Caco-2 (cell line): ENCODE measurements at regions of chr20 and their contacts with region 1.

Region 1: GRCh38 chr20:62793912-62794724 is 2.2 kb upstream of the MRGBP start:
- DNase-seq: peak; percentile 99 to 100
- H3K4me3 ChIP-seq: peak overlapping the region; percentile 57
- H3K4me3 Mint-ChIP-seq: peak overlapping the region; percentile 89
- H3K27ac Mint-ChIP-seq: peak overlapping the region; percentile 85
- H3K4me1 ChIP-seq: peaks cover 21% of the 10 kb centered on the region
- H3K4me1 Mint-ChIP-seq: peaks cover 15% of the 10 kb centered on the region
- H3K27me3 ChIP-seq: no peaks in the 10 kb centered on the region
- H3K27me3 Mint-ChIP-seq: no peaks in the 10 kb centered on the region
- CTCF ChIP-seq: no peak

Region 2: GRCh38 chr20:62368976-62369814 is 424.9 kb before region 1 on chr20:
- CTCF ChIA-PET with region 1: no interaction called
- POLR2A ChIA-PET with region 1: interaction called, 12 read pairs
- intact Hi-C with region 1: no loop called
- DNase-seq: peak in 1 of 2 experiments; percentile 72
- H3K4me3 ChIP-seq: peak overlapping the region; percentile 94
- H3K4me3 Mint-ChIP-seq: peak overlapping the region; percentile 70
- H3K27ac Mint-ChIP-seq: peak overlapping the region; percentile 90
- H3K4me1 ChIP-seq: peaks cover 55% of the 10 kb centered on the region
- H3K4me1 Mint-ChIP-seq: peaks cover 39% of the 10 kb centered on the region
- H3K27me3 ChIP-seq: no peaks in the 10 kb centered on the region
- H3K27me3 Mint-ChIP-seq: no peaks in the 10 kb centered on the region
- CTCF ChIP-seq: peak; percentile 54 to 77

Region 3: DNA sequence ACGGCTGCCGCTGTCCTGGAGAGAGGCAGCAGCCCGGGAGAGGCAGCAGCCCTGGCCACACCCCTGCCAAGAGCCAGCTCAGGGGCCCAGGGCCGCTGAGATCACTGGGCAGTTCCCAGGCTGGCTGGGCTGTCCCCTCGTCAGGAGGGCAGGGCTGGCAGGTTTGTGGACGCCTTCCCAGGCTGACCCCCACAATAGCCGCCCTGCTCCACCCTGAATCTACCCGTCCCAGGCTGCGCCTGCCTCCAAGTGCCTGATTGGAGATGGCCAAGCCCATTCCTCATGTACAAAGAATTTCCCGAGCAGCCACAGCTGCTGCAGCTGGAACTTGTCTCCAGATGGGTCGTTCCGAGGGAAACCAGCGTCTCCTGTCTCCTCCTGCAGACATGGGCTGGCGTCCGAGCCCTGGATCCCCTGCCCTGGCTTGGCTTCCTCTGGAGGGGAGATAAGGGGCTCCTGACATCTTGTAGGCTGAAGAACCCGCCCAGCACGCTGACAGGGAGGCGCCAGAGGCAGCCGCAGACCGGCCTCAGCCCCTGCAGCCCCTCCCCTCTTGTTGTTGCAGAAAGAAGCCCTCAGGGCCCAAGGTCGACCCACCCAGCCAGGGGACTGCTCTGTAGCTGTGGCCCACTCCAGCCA is 308.9 kb before region 1 on chr20:
- CTCF ChIA-PET with region 1: interaction called, 3 read pairs
- POLR2A ChIA-PET with region 1: no interaction called
- intact Hi-C with region 1: loop called (anchors 5 kb)
- DNase-seq: peak; percentile 72 to 89
- H3K4me3 ChIP-seq: no peak overlapping the region
- H3K4me3 Mint-ChIP-seq: peak overlapping the region; percentile 50
- H3K27ac Mint-ChIP-seq: peak overlapping the region; percentile 88
- H3K4me1 ChIP-seq: peaks cover 99% of the 10 kb centered on the region
- H3K4me1 Mint-ChIP-seq: peaks cover 70% of the 10 kb centered on the region
- H3K27me3 ChIP-seq: no peaks in the 10 kb centered on the region
- H3K27me3 Mint-ChIP-seq: no peaks in the 10 kb centered on the region
- CTCF ChIP-seq: peak in 1 of 2 experiments; percentile 0

Region 4: DNA sequence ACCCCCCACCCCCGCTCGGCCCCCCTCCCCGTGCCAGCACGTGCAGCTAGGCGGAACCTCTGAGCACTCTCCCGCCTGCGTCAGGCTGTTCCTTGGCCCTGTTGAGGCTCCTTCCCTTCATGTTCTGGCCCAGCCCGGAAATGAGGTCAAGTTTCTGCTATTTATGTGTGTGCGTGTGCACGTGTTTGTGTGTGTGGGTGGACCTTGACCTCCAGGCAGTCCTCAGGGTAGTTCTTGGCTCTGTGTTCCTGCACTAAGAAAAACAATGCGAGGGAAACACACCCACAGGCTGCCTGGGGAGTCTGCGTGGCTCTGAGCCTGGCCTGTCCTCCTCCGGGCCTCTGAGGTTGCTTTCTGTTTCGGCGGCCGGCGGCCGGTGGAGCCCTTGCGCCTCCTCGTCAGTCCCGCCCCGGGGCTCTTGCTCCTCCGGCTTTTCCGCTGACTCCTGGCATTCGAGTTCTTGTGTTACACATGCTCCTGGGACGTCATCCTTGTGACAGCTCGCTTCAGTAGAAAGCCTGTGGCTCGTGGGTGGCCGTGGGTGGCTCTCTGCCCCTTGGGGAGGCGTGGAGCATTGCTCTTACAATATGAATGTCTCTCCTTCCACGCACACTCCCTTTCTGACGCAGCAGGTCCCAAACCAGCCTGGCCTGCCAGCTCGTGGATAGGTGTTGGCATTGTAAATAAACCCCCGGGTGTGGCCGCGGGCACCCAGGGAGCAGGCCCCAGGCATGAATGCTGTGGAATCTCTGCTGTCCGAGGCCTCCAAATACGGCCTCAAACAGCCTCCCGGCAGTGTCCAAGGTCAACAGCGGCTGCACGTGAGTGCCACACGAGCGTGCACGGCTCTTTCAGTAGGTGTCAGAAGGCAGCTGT is 141.8 kb before region 1 on chr20:
- CTCF ChIA-PET with region 1: interaction called, 7 read pairs
- POLR2A ChIA-PET with region 1: no interaction called
- intact Hi-C with region 1: loop called (anchors 1 kb)
- DNase-seq: peak; percentile 91 to 96
- H3K4me3 ChIP-seq: peak overlapping the region; percentile 17
- H3K4me3 Mint-ChIP-seq: peak overlapping the region; percentile 65
- H3K27ac Mint-ChIP-seq: peak overlapping the region; percentile 78
- H3K4me1 ChIP-seq: peaks cover 28% of the 10 kb centered on the region
- H3K4me1 Mint-ChIP-seq: peaks cover 28% of the 10 kb centered on the region
- H3K27me3 ChIP-seq: no peaks in the 10 kb centered on the region
- H3K27me3 Mint-ChIP-seq: no peaks in the 10 kb centered on the region
- CTCF ChIP-seq: no peak

Region 5: GRCh38 chr20:62694868-62695267 is 99.2 kb before region 1 on chr20:
- CTCF ChIA-PET with region 1: interaction called, 25 read pairs
- POLR2A ChIA-PET with region 1: no interaction called
- intact Hi-C with region 1: no loop called
- DNase-seq: no peak
- H3K4me3 ChIP-seq: no peak overlapping the region
- H3K4me3 Mint-ChIP-seq: no peak overlapping the region
- H3K27ac Mint-ChIP-seq: no peak overlapping the region
- H3K4me1 ChIP-seq: no peaks in the 10 kb centered on the region
- H3K4me1 Mint-ChIP-seq: no peaks in the 10 kb centered on the region
- H3K27me3 ChIP-seq: peaks cover 4% of the 10 kb centered on the region
- H3K27me3 Mint-ChIP-seq: peaks cover 34% of the 10 kb centered on the region
- CTCF ChIP-seq: no peak

Region 6: DNA sequence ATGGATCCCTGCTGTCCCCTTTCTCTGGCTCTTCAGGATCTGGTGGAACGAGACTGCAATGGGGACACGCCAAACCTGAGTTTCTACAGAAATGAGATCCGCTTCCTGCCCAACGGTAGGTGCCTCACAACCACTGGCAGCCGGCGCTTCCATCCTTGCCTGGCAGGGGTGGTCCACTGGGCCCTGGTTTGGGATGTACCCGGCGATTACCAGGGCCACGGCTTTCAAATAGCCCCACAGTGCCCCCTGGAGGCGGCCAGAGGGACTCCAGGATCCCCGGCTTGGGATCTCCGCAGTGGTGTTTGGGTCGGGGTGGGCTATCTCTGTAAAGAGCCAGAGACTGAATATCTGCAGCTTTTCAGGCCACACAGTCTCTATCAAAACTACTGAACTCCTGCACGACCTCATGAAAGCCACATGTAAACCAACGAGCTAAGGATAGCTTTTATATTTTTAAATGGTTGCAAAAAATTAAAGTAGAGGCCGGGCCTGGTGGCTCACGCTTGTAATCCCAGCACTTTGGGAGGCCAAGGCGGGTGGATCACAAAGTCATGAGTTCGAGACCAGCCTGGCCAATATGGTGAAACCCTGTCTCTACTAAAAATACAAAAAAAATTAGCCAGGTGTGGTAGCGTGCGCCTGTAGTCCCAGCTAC is 14.2 kb after region 1 on chr20:
- CTCF ChIA-PET with region 1: interaction called, 57 read pairs
- POLR2A ChIA-PET with region 1: interaction called, 17 read pairs
- intact Hi-C with region 1: loop called (anchors 1 kb)
- DNase-seq: peak in 1 of 2 experiments; percentile 92
- H3K4me3 ChIP-seq: no peak overlapping the region
- H3K4me3 Mint-ChIP-seq: no peak overlapping the region
- H3K27ac Mint-ChIP-seq: no peak overlapping the region
- H3K4me1 ChIP-seq: peaks cover 14% of the 10 kb centered on the region
- H3K4me1 Mint-ChIP-seq: peaks cover 12% of the 10 kb centered on the region
- H3K27me3 ChIP-seq: no peaks in the 10 kb centered on the region
- H3K27me3 Mint-ChIP-seq: no peaks in the 10 kb centered on the region
- CTCF ChIP-seq: peak; percentile 98 to 100

Region 7: DNA sequence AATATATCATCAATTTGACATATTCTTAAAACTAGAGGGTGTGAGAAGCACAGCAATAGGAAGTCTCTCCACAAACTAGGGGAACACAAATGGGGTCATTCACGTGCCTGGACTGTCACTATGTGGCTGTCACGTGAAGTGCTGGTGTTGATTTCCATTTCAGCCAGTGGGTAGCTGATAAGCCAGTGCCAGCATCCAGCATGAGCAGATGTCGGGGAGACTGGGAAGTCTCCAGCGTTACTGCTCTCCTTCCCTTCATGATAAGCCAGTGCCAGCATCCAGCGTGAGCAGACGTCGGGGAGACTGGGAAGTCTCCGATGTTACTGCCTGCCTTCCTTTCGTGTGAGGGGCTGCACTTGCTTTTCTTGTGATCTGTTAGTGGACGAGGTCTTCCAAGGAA is 152.8 kb after region 1 on chr20:
- CTCF ChIA-PET with region 1: no interaction called
- POLR2A ChIA-PET with region 1: no interaction called
- intact Hi-C with region 1: no loop called
- DNase-seq: peak in 1 of 2 experiments; percentile 38
- H3K4me3 ChIP-seq: no peak overlapping the region
- H3K4me3 Mint-ChIP-seq: no peak overlapping the region
- H3K27ac Mint-ChIP-seq: no peak overlapping the region
- H3K4me1 ChIP-seq: peaks cover 7% of the 10 kb centered on the region
- H3K4me1 Mint-ChIP-seq: no peaks in the 10 kb centered on the region
- H3K27me3 ChIP-seq: no peaks in the 10 kb centered on the region
- H3K27me3 Mint-ChIP-seq: no peaks in the 10 kb centered on the region
- CTCF ChIP-seq: no peak